Activated CD4-positive, alpha-beta memory T cell treated with anti-CD3 and anti-CD28 coated beads, Interleukin-2, amount 10 ng/mL, durations not matched to agents 7 days and 5 days (primary cell): ENCODE measurements at regions of chr1 and their contacts with region 1.

Region 1: GRCh38 chr1:60978421-60979357 is 103.7 kb upstream of the NFIA start:
- DNase-seq: peak; percentile 40
- H3K4me3 Mint-ChIP-seq: no peak overlapping the region
- H3K27ac Mint-ChIP-seq: no peak overlapping the region
- H3K4me1 Mint-ChIP-seq: peaks cover 2% of the 10 kb centered on the region
- H3K27me3 Mint-ChIP-seq: peaks cover 10% of the 10 kb centered on the region

Region 2: GRCh38 chr1:60911966-60912697 is 66.6 kb before region 1 on chr1:
- CTCF ChIA-PET with region 1: no interaction called
- POLR2A ChIA-PET with region 1: no interaction called
- DNase-seq: no peak
- H3K4me3 Mint-ChIP-seq: no peak overlapping the region
- H3K27ac Mint-ChIP-seq: no peak overlapping the region
- H3K4me1 Mint-ChIP-seq: no peaks in the 10 kb centered on the region
- H3K27me3 Mint-ChIP-seq: peaks cover 12% of the 10 kb centered on the region

Region 3: GRCh38 chr1:61011561-61012263 is 33.0 kb after region 1 on chr1:
- CTCF ChIA-PET with region 1: no interaction called
- POLR2A ChIA-PET with region 1: no interaction called
- DNase-seq: no peak
- H3K4me3 Mint-ChIP-seq: no peak overlapping the region
- H3K27ac Mint-ChIP-seq: no peak overlapping the region
- H3K4me1 Mint-ChIP-seq: no peaks in the 10 kb centered on the region
- H3K27me3 Mint-ChIP-seq: peaks cover 21% of the 10 kb centered on the region

Region 4: DNA sequence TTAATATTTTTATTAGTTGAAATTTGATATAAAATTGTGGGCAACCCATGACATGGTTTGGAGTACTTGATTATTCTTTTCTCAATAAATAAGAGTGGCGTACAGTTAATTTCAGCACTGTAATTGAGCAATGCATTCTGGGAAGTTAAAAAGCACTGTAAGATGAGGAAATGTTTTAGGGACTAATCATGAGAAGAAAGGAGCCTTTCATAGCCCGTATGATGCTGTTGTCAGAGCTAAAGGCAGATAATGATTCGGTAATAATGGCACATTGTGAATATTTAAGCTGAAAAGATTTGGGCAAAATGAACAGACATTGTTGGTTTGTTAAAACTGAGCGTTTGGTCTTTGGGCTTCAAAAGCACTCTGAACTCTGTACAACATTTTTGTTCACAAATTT is 243.0 kb after region 1 on chr1:
- CTCF ChIA-PET with region 1: no interaction called
- POLR2A ChIA-PET with region 1: no interaction called
- DNase-seq: no peak
- H3K4me3 Mint-ChIP-seq: no peak overlapping the region
- H3K27ac Mint-ChIP-seq: no peak overlapping the region
- H3K4me1 Mint-ChIP-seq: no peaks in the 10 kb centered on the region
- H3K27me3 Mint-ChIP-seq: peaks cover 5% of the 10 kb centered on the region

Region 5: DNA sequence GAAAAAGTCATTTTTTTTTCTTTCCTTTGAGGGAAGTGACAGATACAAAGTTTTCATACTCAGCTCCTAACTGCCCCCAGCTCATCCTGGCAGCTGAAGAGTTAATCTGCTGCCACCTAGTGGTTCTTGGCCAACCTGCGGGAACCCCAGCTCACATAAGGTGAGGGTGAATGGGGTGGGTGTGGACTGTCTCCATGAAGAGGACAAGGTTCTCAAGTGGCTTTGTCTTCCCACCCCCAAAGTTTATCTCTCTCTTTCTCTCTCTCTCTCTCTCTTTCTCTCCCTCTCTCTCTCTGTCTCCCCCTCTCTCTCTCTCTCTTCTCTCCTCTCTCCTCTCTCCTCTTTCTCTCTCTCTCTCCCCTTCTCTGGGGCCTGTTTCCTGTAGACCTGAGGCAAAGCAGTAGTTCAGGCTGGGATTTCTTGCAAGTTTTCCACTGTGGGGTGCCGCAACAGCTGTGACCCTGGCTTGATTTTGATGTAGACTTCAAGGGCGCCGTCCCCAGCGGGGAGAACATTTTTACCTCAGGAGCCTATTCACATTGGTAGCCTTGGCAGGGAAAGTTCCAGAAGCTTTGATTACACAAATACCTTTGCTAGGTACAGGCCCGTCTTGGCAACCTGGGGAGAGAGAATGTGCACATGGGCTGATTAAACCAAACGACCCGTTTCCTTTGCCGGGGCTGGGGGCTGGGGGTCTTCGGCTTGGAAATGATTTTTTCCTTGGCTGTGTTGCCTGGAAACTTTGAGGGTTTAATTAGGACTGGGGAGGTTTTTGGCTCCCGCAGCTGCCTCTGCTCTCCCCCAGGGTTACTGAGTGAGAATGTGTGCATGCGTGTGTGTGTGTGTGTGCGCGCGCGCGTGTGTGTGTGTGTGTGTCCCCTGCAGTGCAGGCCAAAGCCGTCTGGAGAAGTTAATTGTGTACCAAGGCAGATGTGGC is 610.3 kb after region 1 on chr1:
- CTCF ChIA-PET with region 1: interaction called, 12 read pairs
- POLR2A ChIA-PET with region 1: no interaction called
- DNase-seq: peak; percentile 63
- H3K4me3 Mint-ChIP-seq: no peak overlapping the region
- H3K27ac Mint-ChIP-seq: no peak overlapping the region
- H3K4me1 Mint-ChIP-seq: no peaks in the 10 kb centered on the region
- H3K27me3 Mint-ChIP-seq: peaks cover 7% of the 10 kb centered on the region